IMR-90 (cell line): ENCODE measurements at regions of chr5 and their contacts with region 1.

Region 1: GRCh38 chr5:73591102-73591695 is 25.7 kb downstream of the UTP15 start:
- DNase-seq: peak; percentile 90
- ATAC-seq: peak; percentile 87
- H3K4me3 ChIP-seq: no peak overlapping the region
- H3K27ac ChIP-seq: no peak overlapping the region; the same call in 1 of the 2 replicates
- H3K4me1 ChIP-seq: no peaks in the 10 kb centered on the region
- H3K27me3 ChIP-seq: no peaks in the 10 kb centered on the region
- CTCF ChIP-seq: peak; percentile 88
- POLR2A ChIP-seq: no peak
- RAD21 ChIP-seq: peak; percentile 92

Region 2: DNA sequence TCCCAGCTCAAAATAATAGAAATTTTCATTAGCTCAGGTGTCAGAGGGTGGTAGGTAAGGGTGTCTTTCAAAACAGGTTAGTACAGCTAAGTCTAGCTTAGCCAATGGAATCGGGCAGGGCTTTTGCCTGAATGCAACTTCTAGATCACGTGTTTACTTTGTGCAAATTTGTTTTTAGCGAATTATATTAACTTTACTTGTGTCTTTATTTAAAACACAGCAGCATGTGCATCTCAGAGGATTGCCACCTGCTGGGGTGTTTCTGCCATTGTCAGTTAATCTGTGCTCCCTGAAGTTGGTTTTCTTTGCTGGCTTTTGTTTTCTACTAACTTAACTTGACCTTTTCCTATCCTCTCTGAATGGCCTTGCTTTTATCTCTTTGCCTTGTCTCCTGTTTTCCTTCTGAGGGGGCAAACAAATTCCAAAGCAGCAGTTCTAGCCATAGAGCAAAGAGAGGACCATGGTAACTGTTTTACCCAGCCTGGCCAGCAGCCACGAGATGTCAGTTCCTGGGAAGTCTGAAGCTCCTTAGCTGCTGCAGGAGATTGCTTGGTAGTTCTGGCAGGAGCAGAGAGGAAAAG is 102.4 kb after region 1 on chr5:
- CTCF ChIA-PET with region 1: interaction called, 13 read pairs
- POLR2A ChIA-PET with region 1: no interaction called
- dilution Hi-C with region 1: no loop called
- in situ Hi-C with region 1: no loop called
- intact Hi-C with region 1: loop called (anchors 2 kb)
- DNase-seq: peak; percentile 49
- ATAC-seq: peak; percentile 16; the same call in 1 of the 2 replicates
- H3K4me3 ChIP-seq: no peak overlapping the region
- H3K27ac ChIP-seq: peak overlapping the region; percentile 17; the same call in 1 of the 2 replicates
- H3K4me1 ChIP-seq: peaks cover 23% of the 10 kb centered on the region
- H3K27me3 ChIP-seq: no peaks in the 10 kb centered on the region
- CTCF ChIP-seq: peak; percentile 59
- POLR2A ChIP-seq: no peak
- RAD21 ChIP-seq: peak; percentile 53

Region 3: DNA sequence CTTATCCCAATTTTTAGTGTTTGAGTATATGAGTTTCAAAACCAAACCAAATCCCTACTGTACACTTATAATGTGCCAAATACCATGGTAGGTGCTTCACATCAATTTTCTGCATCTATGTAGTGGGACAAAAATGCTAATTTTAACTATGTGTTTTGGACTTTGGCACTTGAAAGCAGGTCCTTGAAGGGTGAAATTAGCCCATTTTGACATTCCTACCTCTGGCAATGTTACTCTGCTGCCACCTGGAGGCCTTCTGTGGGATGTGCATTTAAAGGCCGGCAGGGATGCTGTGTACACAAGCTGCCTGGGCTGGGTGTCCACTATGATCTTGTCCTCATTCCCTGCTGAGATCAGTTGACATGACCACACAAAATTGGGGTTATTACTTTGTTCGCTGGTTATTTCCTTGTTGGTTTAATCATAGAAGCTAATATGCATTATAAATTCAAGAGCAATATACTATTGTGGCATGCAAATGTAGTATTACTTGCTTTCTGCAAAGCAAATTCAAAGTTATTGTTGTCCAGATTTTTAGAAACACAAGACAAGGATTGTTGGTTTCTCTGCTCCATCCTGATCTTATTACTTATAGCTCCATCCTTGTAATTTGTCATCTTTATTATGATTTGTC is 201.6 kb after region 1 on chr5:
- CTCF ChIA-PET with region 1: interaction called, 35 read pairs
- POLR2A ChIA-PET with region 1: no interaction called
- dilution Hi-C with region 1: loop called (anchors 25 kb)
- in situ Hi-C with region 1: loop called (anchors 5 kb)
- intact Hi-C with region 1: loop called (anchors 1 kb)
- DNase-seq: peak; percentile 76
- ATAC-seq: peak; percentile 71
- H3K4me3 ChIP-seq: no peak overlapping the region
- H3K27ac ChIP-seq: no peak overlapping the region
- H3K4me1 ChIP-seq: peaks cover 19% of the 10 kb centered on the region
- H3K27me3 ChIP-seq: no peaks in the 10 kb centered on the region
- CTCF ChIP-seq: peak; percentile 96
- POLR2A ChIP-seq: no peak
- RAD21 ChIP-seq: peak; percentile 97

Region 4: GRCh38 chr5:73902327-73903051 is 311.3 kb after region 1 on chr5:
- CTCF ChIA-PET with region 1: interaction called, 6 read pairs
- POLR2A ChIA-PET with region 1: no interaction called
- dilution Hi-C with region 1: no loop called
- in situ Hi-C with region 1: no loop called
- intact Hi-C with region 1: loop called (anchors 2 kb)
- DNase-seq: peak; percentile 77
- ATAC-seq: peak; percentile 63
- H3K4me3 ChIP-seq: no peak overlapping the region
- H3K27ac ChIP-seq: no peak overlapping the region
- H3K4me1 ChIP-seq: peaks cover 4% of the 10 kb centered on the region
- H3K27me3 ChIP-seq: no peaks in the 10 kb centered on the region
- CTCF ChIP-seq: peak; percentile 80
- POLR2A ChIP-seq: no peak
- RAD21 ChIP-seq: peak; percentile 81

Region 5: DNA sequence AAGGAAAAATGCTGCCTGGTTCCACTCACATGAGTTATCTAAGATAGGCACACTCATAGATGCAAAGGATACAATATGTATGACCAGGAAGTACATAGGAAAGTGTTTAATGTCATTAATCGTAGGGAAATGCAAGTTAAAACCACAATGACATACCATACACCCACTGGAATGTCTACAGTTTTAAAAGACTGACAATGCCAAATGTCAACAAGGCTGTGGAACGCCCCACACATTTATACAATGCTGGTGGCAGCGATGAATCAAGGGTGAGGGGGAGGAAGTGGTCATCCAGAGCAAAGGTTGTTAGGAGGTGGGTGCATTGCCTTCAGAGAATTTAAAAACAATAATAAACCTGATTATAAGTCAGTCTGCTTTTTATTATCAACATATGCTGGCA is 472.6 kb after region 1 on chr5:
- CTCF ChIA-PET with region 1: no interaction called
- POLR2A ChIA-PET with region 1: no interaction called
- dilution Hi-C with region 1: no loop called
- in situ Hi-C with region 1: no loop called
- intact Hi-C with region 1: no loop called
- DNase-seq: peak; percentile 72
- ATAC-seq: peak; percentile 92
- H3K4me3 ChIP-seq: no peak overlapping the region
- H3K27ac ChIP-seq: no peak overlapping the region
- H3K4me1 ChIP-seq: peaks cover 2% of the 10 kb centered on the region
- H3K27me3 ChIP-seq: no peaks in the 10 kb centered on the region
- CTCF ChIP-seq: no peak
- POLR2A ChIP-seq: no peak
- RAD21 ChIP-seq: no peak

Region 6: GRCh38 chr5:74500110-74500917 is 909.1 kb after region 1 on chr5:
- CTCF ChIA-PET with region 1: no interaction called
- POLR2A ChIA-PET with region 1: no interaction called
- dilution Hi-C with region 1: no loop called
- in situ Hi-C with region 1: no loop called
- intact Hi-C with region 1: no loop called
- DNase-seq: no peak
- ATAC-seq: peak; percentile 24; the same call in 1 of the 2 replicates
- H3K4me3 ChIP-seq: no peak overlapping the region
- H3K27ac ChIP-seq: no peak overlapping the region
- H3K4me1 ChIP-seq: no peaks in the 10 kb centered on the region; the same call in 1 of the 2 replicates
- H3K27me3 ChIP-seq: no peaks in the 10 kb centered on the region
- CTCF ChIP-seq: no peak
- POLR2A ChIP-seq: no peak
- RAD21 ChIP-seq: no peak

Region 7: DNA sequence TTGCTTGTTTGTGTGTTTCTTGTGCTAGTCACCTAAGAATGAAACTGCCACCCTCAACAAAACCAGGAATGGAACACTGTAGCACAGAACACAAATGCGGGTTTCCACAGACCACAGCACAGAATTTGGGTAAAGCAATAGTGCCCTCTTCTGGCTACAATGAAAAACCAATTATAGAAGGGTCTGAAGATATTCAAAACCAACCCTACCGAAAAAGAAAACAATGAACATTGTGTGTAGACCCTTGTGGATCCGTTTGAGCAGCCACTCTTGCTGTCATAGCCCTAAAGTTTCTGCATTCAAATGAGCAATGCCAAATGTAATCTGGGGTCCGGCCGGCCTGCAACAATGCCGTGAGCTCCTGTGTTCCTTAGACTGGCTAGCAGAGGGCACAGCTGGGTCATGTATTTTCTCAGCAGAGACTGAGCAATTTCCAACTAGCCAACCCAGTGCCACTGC is 1057.7 kb after region 1 on chr5:
- CTCF ChIA-PET with region 1: no interaction called
- POLR2A ChIA-PET with region 1: no interaction called
- dilution Hi-C with region 1: no loop called
- in situ Hi-C with region 1: loop called (anchors 5 kb)
- intact Hi-C with region 1: loop called (anchors 2 kb)
- DNase-seq: peak; percentile 65
- ATAC-seq: peak; percentile 93
- H3K4me3 ChIP-seq: peak overlapping the region; percentile 48
- H3K27ac ChIP-seq: no peak overlapping the region
- H3K4me1 ChIP-seq: peaks cover 5% of the 10 kb centered on the region
- H3K27me3 ChIP-seq: no peaks in the 10 kb centered on the region
- CTCF ChIP-seq: peak; percentile 66
- POLR2A ChIP-seq: no peak
- RAD21 ChIP-seq: peak; percentile 85